IMR-90 (cell line): ENCODE measurements at regions of chr4 and their contacts with region 1.

Region 1: GRCh38 chr4:57426779-57427395 is 316.7 kb upstream of the IGFBP7 start:
- DNase-seq: peak; percentile 66
- ATAC-seq: peak; percentile 77
- H3K4me3 ChIP-seq: no peak overlapping the region
- H3K27ac ChIP-seq: no peak overlapping the region
- H3K4me1 ChIP-seq: no peaks in the 10 kb centered on the region
- H3K27me3 ChIP-seq: no peaks in the 10 kb centered on the region
- CTCF ChIP-seq: peak; percentile 68
- POLR2A ChIP-seq: no peak
- RAD21 ChIP-seq: peak; percentile 67

Region 2: GRCh38 chr4:57037982-57038604 is 388.8 kb before region 1 on chr4:
- CTCF ChIA-PET with region 1: no interaction called
- POLR2A ChIA-PET with region 1: no interaction called
- dilution Hi-C with region 1: no loop called
- in situ Hi-C with region 1: loop called (anchors 25 kb)
- intact Hi-C with region 1: no loop called
- DNase-seq: peak; percentile 55
- ATAC-seq: peak; percentile 73
- H3K4me3 ChIP-seq: no peak overlapping the region
- H3K27ac ChIP-seq: no peak overlapping the region
- H3K4me1 ChIP-seq: peaks cover 8% of the 10 kb centered on the region
- H3K27me3 ChIP-seq: no peaks in the 10 kb centered on the region
- CTCF ChIP-seq: peak; percentile 86
- POLR2A ChIP-seq: peak; percentile 22; the same call in 1 of the 2 replicates
- RAD21 ChIP-seq: peak; percentile 94

Region 3: GRCh38 chr4:57550198-57550597 is 123.3 kb after region 1 on chr4:
- CTCF ChIA-PET with region 1: no interaction called
- POLR2A ChIA-PET with region 1: no interaction called
- dilution Hi-C with region 1: no loop called
- in situ Hi-C with region 1: no loop called
- intact Hi-C with region 1: no loop called
- DNase-seq: no peak
- ATAC-seq: no peak
- H3K4me3 ChIP-seq: no peak overlapping the region
- H3K27ac ChIP-seq: no peak overlapping the region
- H3K4me1 ChIP-seq: no peaks in the 10 kb centered on the region
- H3K27me3 ChIP-seq: no peaks in the 10 kb centered on the region
- CTCF ChIP-seq: no peak
- POLR2A ChIP-seq: no peak
- RAD21 ChIP-seq: no peak